Caco-2 (cell line): ENCODE measurements at regions of chr2 and their contacts with region 1.

Region 1: DNA sequence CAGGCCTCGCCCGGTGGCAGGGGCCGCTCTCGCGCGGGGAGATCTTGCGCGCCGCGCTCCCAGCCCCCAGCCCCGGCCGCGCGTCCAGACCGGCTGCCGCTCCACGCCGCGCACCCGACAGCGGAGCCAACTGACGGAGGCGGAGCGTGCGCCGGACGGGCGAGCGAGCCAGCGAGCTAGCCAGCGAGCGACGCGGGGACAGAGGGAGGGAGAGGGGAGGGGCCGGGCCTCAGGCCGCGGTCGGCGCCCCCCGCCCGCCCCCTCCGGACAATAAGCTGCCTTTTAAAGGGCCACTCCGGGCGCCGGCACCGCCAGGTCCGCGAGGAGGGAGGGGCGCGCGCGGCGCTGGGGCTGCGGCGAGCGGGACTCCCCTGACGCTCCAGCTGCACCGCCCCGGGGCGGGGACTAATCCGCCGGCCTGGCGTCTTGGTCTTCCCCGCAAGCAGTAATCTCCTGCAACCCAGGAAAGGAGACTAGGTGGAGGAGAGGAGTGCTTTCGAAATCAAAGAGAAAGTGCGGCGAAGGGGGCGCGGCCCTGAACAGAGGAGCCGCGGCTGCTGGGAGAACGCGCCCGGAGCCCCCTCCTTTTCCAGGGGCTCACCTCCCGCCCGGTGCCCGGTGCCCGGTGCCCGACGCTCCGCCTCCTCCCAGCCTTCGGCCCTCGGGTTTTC is at the start of gene BIN1:
- DNase-seq: peak; percentile 97 to 98
- H3K4me3 ChIP-seq: peak within 1 kb of the TSS; percentile 98
- H3K4me3 Mint-ChIP-seq: peak within 1 kb of the TSS; percentile 85
- H3K27ac Mint-ChIP-seq: peak within 1 kb of the TSS; percentile 84
- H3K4me1 ChIP-seq: peaks cover 47% of the 10 kb centered on the region
- H3K4me1 Mint-ChIP-seq: peaks cover 39% of the 10 kb centered on the region
- H3K27me3 ChIP-seq: no peaks in the 10 kb centered on the region
- H3K27me3 Mint-ChIP-seq: no peaks in the 10 kb centered on the region
- CTCF ChIP-seq: no peak
- total RNA-seq, gene BIN1: 198 and 205 TPM in 2 replicates

Region 2: GRCh38 chr2:127049927-127050802 is 56.9 kb before region 1 on chr2:
- CTCF ChIA-PET with region 1: no interaction called
- POLR2A ChIA-PET with region 1: no interaction called
- intact Hi-C with region 1: no loop called
- DNase-seq: peak; percentile 46 to 77
- H3K4me3 ChIP-seq: no peak overlapping the region
- H3K4me3 Mint-ChIP-seq: no peak overlapping the region
- H3K27ac Mint-ChIP-seq: no peak overlapping the region
- H3K4me1 ChIP-seq: peaks cover 9% of the 10 kb centered on the region; the same call in 1 of the 2 replicates
- H3K4me1 Mint-ChIP-seq: peaks cover 14% of the 10 kb centered on the region
- H3K27me3 ChIP-seq: no peaks in the 10 kb centered on the region
- H3K27me3 Mint-ChIP-seq: no peaks in the 10 kb centered on the region
- CTCF ChIP-seq: peak; percentile 87 to 97

Region 3: DNA sequence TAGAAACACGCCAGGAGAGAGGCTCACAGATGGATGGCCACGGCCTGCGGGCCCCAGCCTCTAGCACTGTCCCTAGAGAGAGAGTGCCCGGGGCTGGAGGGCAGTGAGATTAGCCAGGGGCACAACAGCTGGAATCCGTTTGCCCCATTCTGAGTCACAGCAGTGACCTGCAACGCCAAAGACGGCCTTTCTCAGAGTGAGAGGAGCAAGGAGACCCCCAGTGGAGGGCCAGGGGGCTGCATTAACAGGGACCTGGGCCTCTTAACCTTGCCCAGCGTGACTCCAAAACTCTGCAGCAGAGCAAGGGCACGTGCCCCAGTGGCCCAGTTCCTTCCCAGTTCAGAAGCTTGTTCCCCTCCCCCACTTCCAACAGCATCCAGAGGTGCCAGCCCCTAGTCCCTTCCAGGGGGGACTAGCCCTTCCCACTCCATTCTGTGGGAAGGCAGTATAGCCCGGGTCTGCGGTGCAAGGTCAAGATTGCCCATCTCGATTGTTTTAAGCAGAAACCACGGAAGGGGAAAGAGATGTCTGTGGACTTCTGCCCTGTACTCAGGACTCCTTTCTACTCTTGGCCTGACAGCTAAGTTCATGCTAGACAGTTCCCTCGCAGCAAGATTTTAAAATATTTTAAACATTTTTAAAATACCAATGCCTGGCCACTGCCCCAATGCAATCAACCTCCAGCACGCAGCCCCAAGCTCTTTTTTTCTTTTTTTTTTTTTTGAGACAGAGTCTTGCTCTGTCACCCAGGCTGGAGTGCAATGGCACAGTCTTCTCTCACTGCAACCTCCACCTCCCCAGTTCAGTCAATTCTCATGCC is 50.8 kb after region 1 on chr2:
- CTCF ChIA-PET with region 1: no interaction called
- POLR2A ChIA-PET with region 1: interaction called, 3 read pairs
- intact Hi-C with region 1: loop called (anchors 1 kb)
- DNase-seq: peak in 1 of 2 experiments; percentile 60
- H3K4me3 ChIP-seq: no peak overlapping the region
- H3K4me3 Mint-ChIP-seq: no peak overlapping the region
- H3K27ac Mint-ChIP-seq: peak overlapping the region; percentile 70
- H3K4me1 ChIP-seq: peaks cover 38% of the 10 kb centered on the region
- H3K4me1 Mint-ChIP-seq: peaks cover 30% of the 10 kb centered on the region
- H3K27me3 ChIP-seq: no peaks in the 10 kb centered on the region
- H3K27me3 Mint-ChIP-seq: no peaks in the 10 kb centered on the region
- CTCF ChIP-seq: peak; percentile 41 to 44

Region 4: DNA sequence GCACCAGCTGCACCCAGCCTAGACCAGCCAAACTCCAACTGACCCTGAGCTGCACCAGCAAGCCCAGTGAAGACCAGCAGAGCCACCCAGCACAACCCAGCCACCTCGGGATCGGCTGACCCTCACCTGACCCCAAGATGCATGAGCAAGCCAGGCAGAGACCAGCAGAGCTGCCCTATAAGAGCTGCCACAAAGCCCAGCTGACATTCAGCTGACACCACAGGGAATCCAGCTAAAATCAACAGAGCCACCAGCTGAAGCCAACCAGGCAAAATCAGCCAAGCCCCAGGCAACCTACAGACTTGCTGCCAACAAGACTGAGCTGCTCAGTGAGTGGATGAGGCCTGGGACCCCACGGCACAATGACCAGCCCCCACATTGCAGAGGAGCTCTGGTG is 58.5 kb after region 1 on chr2:
- CTCF ChIA-PET with region 1: no interaction called
- POLR2A ChIA-PET with region 1: no interaction called
- intact Hi-C with region 1: loop called (anchors 1 kb)
- DNase-seq: no peak
- H3K4me3 ChIP-seq: no peak overlapping the region
- H3K4me3 Mint-ChIP-seq: no peak overlapping the region
- H3K27ac Mint-ChIP-seq: no peak overlapping the region
- H3K4me1 ChIP-seq: peaks cover 83% of the 10 kb centered on the region
- H3K4me1 Mint-ChIP-seq: peaks cover 52% of the 10 kb centered on the region
- H3K27me3 ChIP-seq: no peaks in the 10 kb centered on the region
- H3K27me3 Mint-ChIP-seq: no peaks in the 10 kb centered on the region
- CTCF ChIP-seq: no peak

Region 5: GRCh38 chr2:127508631-127509034 is 401.5 kb after region 1 on chr2:
- CTCF ChIA-PET with region 1: no interaction called
- POLR2A ChIA-PET with region 1: no interaction called
- intact Hi-C with region 1: no loop called
- DNase-seq: no peak
- H3K4me3 ChIP-seq: no peak overlapping the region
- H3K4me3 Mint-ChIP-seq: no peak overlapping the region
- H3K27ac Mint-ChIP-seq: no peak overlapping the region
- H3K4me1 ChIP-seq: 0 out of 2 replicates have a peak, but pooled peaks cover 16% of the 10 kb centered on the region
- H3K4me1 Mint-ChIP-seq: peaks cover 20% of the 10 kb centered on the region
- H3K27me3 ChIP-seq: no peaks in the 10 kb centered on the region
- H3K27me3 Mint-ChIP-seq: no peaks in the 10 kb centered on the region
- CTCF ChIP-seq: no peak